Activated CD4-positive, alpha-beta memory T cell treated with anti-CD3 and anti-CD28 coated beads for 36 hours (primary cell): ENCODE measurements at regions of chr3 and their contacts with region 1.

Region 1: DNA sequence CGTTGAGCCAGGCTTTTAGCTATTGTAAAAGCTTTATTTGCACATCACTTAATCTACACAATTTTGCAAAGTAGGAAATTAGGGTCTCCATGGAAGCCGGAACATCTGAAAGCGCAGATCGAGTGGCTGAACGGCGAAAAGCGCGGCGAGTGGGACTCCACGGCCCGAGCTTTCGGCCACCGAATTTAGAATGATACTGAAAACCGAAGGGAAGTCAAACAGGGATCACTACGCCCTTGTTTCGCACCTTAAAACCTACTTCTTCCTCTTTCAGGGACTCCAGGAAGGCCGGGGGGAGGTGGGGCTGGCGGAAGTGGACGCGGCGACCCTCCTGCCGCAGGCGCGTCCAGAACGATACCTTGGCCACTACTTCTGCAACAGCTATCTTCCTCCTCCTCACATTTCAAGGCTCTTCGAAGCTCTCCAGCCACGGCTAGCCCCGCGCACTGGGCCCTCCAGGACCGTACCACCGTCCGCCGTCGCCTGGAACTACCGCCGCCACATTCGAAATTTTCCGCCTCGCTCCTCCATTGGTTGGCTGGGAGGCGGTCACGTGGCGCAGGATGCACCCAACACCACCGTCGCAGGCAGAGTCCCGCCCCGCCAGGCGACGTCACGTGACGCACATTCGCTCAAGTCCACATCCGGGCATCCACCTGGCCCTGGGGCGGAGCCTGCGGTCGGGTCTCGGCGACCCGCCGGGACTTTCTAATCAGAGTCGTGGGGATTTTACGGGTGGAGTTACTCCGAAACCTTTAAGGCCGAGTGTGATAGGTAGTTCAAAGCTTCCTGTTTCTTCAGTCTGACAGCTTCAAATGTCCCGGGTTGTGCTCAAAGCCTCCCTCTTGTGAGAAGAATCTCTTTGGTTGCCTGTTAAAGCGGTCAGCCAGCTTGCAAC is at the start of gene SGO1:
- DNase-seq: peak; percentile 100
- H3K4me3 Mint-ChIP-seq: no peak within 1 kb of the TSS
- H3K27ac Mint-ChIP-seq: no peak within 1 kb of the TSS
- H3K4me1 Mint-ChIP-seq: no peaks in the 10 kb centered on the region
- H3K27me3 Mint-ChIP-seq: no peaks in the 10 kb centered on the region
- total RNA-seq, gene SGO1: 37.4 to 37.8 TPM

Region 2: GRCh38 chr3:19885468-19885867 is 300.5 kb before region 1 on chr3:
- CTCF ChIA-PET with region 1: interaction called, 4 read pairs
- POLR2A ChIA-PET with region 1: no interaction called
- intact Hi-C with region 1: loop called (anchors 5 kb)
- DNase-seq: no peak
- H3K4me3 Mint-ChIP-seq: no peak overlapping the region
- H3K27ac Mint-ChIP-seq: no peak overlapping the region
- H3K4me1 Mint-ChIP-seq: no peaks in the 10 kb centered on the region
- H3K27me3 Mint-ChIP-seq: peaks cover 2% of the 10 kb centered on the region

Region 3: DNA sequence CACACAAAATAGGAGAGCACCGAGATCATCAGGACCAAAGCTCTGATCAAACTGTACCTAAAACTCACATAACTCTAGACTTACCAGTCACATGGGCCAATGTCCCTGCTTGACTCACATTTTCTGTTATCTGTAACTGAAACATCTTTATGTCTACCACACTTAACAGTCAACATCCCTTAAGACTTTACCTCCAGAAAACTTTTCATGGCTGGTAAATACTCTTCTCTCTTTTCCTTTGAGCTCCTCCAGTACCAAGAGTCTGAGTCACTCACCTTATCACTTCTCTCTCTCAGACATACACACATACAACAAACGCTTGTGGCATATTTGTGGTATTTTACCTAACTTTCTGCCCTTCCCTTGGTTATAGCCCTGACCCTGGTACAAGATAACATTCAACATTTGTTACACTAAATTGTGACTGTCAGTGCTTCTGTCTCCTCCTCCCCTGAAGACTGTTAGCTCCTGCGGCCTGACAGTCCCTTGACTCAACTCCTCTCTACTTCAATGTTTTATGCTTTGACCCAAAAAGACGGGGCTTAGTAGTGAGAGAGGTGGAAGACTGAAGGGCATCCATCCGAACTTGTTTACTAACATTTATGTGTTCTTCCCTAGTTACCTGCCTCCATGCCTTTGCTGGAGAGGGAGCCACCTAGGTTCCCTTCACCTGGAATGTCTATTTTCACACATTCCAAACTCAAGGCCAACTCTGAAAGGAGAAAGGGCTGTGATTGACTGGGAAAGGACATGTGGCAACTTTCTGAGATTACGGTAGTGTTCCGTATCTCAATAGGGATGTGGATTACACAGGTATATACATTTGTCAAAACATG is 248.3 kb before region 1 on chr3:
- CTCF ChIA-PET with region 1: no interaction called
- POLR2A ChIA-PET with region 1: no interaction called
- intact Hi-C with region 1: loop called (anchors 2 kb)
- DNase-seq: peak; percentile 27
- H3K4me3 Mint-ChIP-seq: no peak overlapping the region
- H3K27ac Mint-ChIP-seq: peak overlapping the region; percentile 75
- H3K4me1 Mint-ChIP-seq: peaks cover 29% of the 10 kb centered on the region
- H3K27me3 Mint-ChIP-seq: peaks cover 12% of the 10 kb centered on the region

Region 4: GRCh38 chr3:19946832-19947548 is 239.0 kb before region 1 on chr3 and contains the start of gene RAB5A:
- CTCF ChIA-PET with region 1: no interaction called
- POLR2A ChIA-PET with region 1: interaction called, 14 read pairs
- intact Hi-C with region 1: loop called (anchors 1 kb)
- DNase-seq: peak; percentile 98
- H3K4me3 Mint-ChIP-seq: peak within 1 kb of the TSS; percentile 93
- H3K27ac Mint-ChIP-seq: peak within 1 kb of the TSS; percentile 99
- H3K4me1 Mint-ChIP-seq: peaks cover 44% of the 10 kb centered on the region
- H3K27me3 Mint-ChIP-seq: no peaks in the 10 kb centered on the region
- total RNA-seq, gene RAB5A: 55.6 to 65.3 TPM